ENCODE measurements at regions of chr15 and their contacts with region 1.

Region 1: GRCh38 chr15:68277603-68278344 is at the start of gene FEM1B:
- DNase-seq: peak; percentile 90
- ATAC-seq: peak; percentile 82
- H3K4me3 Mint-ChIP-seq: peak within 1 kb of the TSS; percentile 88
- H3K27ac Mint-ChIP-seq: peak within 1 kb of the TSS; percentile 98
- H3K4me1 Mint-ChIP-seq: peaks cover 39% of the 10 kb centered on the region
- H3K27me3 Mint-ChIP-seq: no peaks in the 10 kb centered on the region
- total RNA-seq, gene FEM1B: 45.1 to 50.7 TPM

Region 2: DNA sequence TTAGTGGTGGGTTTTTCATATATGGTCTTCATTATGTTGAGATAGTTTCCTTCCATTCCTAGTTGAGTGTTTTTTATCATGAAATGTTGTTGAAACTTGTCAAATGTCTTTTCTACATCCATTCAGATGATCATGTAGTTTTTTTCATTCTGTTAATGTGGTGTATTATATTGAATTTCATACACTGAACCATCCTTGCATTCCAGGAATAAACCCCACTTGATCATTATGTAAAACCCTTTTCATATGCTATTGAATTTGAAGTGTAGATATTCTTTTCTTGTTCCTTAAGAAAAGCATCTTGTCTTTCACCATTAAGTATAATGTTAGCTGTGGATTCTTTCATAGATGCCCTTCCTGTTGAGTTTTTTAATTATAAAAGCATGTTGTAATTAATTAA is 180.7 kb before region 1 on chr15:
- CTCF ChIA-PET with region 1: no interaction called
- POLR2A ChIA-PET with region 1: no interaction called
- DNase-seq: no peak
- ATAC-seq: no peak
- H3K4me3 Mint-ChIP-seq: no peak overlapping the region
- H3K27ac Mint-ChIP-seq: no peak overlapping the region
- H3K4me1 Mint-ChIP-seq: peaks cover 26% of the 10 kb centered on the region
- H3K27me3 Mint-ChIP-seq: no peaks in the 10 kb centered on the region

Region 3: DNA sequence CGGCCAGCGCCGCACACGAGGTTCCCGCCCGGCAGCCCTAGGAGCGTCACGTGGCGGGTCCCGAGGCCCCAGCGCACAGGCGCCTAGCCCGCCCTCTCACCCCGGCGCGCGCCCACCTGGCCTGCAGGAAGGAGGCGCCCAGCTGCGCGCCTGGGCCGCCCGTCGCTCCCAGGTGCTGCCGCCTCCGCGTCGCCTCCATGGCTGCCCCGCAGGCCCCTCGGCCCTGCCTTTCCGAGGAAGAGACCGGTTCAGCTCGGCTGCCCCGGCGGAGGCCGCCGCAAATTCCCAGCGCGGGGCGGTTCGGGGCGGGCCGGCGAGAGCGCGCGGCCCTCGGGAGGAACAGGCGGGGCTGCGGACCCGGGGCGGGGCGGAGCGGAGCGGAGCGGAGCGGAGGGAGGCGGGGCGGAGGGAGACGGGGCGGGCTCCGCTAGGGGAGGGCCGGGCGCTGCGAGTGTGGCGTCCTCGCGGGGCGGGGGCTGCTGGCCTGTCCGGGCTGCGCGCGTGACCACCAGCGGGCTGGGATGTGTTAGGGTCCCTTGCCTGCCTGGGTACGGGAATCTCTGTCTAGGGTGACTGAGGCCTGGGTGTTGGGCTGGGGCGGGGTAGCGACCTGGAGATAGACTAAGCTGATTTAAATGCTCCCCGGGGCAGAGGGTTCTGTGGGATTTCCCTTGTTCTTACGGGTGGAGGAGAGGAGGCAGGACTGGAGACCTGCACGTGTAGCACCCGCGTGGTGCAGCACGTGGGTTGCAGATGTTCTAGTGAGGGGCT is 48.2 kb before region 1 on chr15 and contains the start of gene CLN6:
- CTCF ChIA-PET with region 1: interaction called, 4 read pairs
- POLR2A ChIA-PET with region 1: interaction called, 32 read pairs
- DNase-seq: peak; percentile 89
- ATAC-seq: peak; percentile 92
- H3K4me3 Mint-ChIP-seq: peak within 1 kb of the TSS; percentile 90
- H3K27ac Mint-ChIP-seq: peak within 1 kb of the TSS; percentile 93
- H3K4me1 Mint-ChIP-seq: peaks cover 48% of the 10 kb centered on the region
- H3K27me3 Mint-ChIP-seq: no peaks in the 10 kb centered on the region
- total RNA-seq, gene CLN6: 64.5 to 69.7 TPM

Region 4: DNA sequence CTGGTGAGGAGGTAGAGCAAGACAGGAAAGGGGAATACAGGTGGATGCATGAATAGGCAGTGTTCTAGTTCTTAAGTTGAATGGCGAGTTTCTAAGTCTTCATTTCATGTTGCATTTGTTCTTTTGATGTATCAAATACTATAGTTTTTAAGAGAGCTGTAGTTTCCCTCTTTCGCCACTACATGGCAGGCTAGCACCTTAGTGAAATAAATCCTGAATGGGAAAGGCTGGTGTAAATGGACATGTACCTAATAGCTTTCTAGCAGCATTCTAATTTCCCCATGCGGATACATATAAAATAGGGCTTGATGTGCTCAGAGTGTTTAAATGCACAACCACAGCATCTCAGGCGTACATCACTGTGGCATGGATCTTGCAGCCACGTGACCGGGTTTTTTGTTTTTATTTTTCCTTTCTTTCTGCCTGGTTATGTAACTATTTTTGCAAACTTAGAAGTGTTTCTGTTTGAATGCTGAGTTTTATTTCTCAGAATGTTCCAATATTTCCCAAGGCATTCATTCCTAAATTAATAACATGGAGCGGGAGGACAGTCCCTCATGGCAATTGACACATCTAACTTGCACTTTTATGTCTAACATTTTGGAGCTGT is 24.7 kb before region 1 on chr15:
- CTCF ChIA-PET with region 1: interaction called, 37 read pairs
- POLR2A ChIA-PET with region 1: interaction called, 8 read pairs
- DNase-seq: peak; percentile 63
- ATAC-seq: peak; percentile 63
- H3K4me3 Mint-ChIP-seq: no peak overlapping the region
- H3K27ac Mint-ChIP-seq: no peak overlapping the region
- H3K4me1 Mint-ChIP-seq: peaks cover 7% of the 10 kb centered on the region
- H3K27me3 Mint-ChIP-seq: peaks cover 27% of the 10 kb centered on the region

Region 5: GRCh38 chr15:68292157-68292781 is 14.5 kb after region 1 on chr15:
- CTCF ChIA-PET with region 1: interaction called, 23 read pairs
- POLR2A ChIA-PET with region 1: interaction called, 28 read pairs
- DNase-seq: no peak
- ATAC-seq: peak; percentile 61
- H3K4me3 Mint-ChIP-seq: no peak overlapping the region
- H3K27ac Mint-ChIP-seq: no peak overlapping the region
- H3K4me1 Mint-ChIP-seq: peaks cover 33% of the 10 kb centered on the region
- H3K27me3 Mint-ChIP-seq: no peaks in the 10 kb centered on the region

Region 6: GRCh38 chr15:68298882-68299381 is 21.2 kb after region 1 on chr15:
- CTCF ChIA-PET with region 1: interaction called, 23 read pairs
- POLR2A ChIA-PET with region 1: interaction called, 28 read pairs
- DNase-seq: peak; percentile 58
- ATAC-seq: peak; percentile 93
- H3K4me3 Mint-ChIP-seq: peak overlapping the region; percentile 69
- H3K27ac Mint-ChIP-seq: peak overlapping the region; percentile 88
- H3K4me1 Mint-ChIP-seq: peaks cover 27% of the 10 kb centered on the region
- H3K27me3 Mint-ChIP-seq: no peaks in the 10 kb centered on the region

Region 7: GRCh38 chr15:68383161-68384074 is 105.6 kb after region 1 on chr15:
- CTCF ChIA-PET with region 1: interaction called, 4 read pairs
- POLR2A ChIA-PET with region 1: interaction called, 10 read pairs
- DNase-seq: peak; percentile 70
- ATAC-seq: peak; percentile 57
- H3K4me3 Mint-ChIP-seq: no peak overlapping the region
- H3K27ac Mint-ChIP-seq: no peak overlapping the region
- H3K4me1 Mint-ChIP-seq: peaks cover 25% of the 10 kb centered on the region
- H3K27me3 Mint-ChIP-seq: no peaks in the 10 kb centered on the region